Left lung (tissue), 14 donors: ENCODE measurements at regions of chr6 and their contacts with region 1.

Region 1: GRCh38 chr6:170516783-170517616 is 36.1 kb downstream of the PSMB1 start:
- DNase-seq: no peak
- ATAC-seq: peak; percentile 98
- H3K4me3 ChIP-seq: no peak overlapping the region
- H3K27ac ChIP-seq: no peak overlapping the region
- H3K4me1 ChIP-seq: no peaks in the 10 kb centered on the region
- H3K27me3 ChIP-seq: no peaks in the 10 kb centered on the region
- CTCF ChIP-seq: peak; percentile 66 to 72

Region 2: GRCh38 chr6:170316071-170316470 is 200.9 kb before region 1 on chr6:
- intact Hi-C with region 1: loop called in 1 of 2 experiments (anchors 10 kb)
- DNase-seq: no peak
- ATAC-seq: no peak
- H3K4me3 ChIP-seq: no peak overlapping the region
- H3K27ac ChIP-seq: no peak overlapping the region
- H3K4me1 ChIP-seq: peaks cover 0 to 12% of the 10 kb centered on the region in 2 donors
- H3K27me3 ChIP-seq: no peaks in the 10 kb centered on the region
- CTCF ChIP-seq: no peak